Activated T-helper 1 cell treated with anti-CD3 and anti-CD28 coated beads, Interleukin-12 subunit alpha, Interleukin-12 subunit beta, Interleukin-2, Interleukin-4 antibody, amounts not matched to agents 30 ng/mL and 10 ng/mL and 1 ng/mL, durations not matched to agents 14 hours and 24 hours and 36 hours (primary cell): ENCODE measurements at regions of chrX and their contacts with region 1.

Region 1: GRCh38 chrX:120629667-120630537 is at the start of gene C1GALT1C1:
- DNase-seq: peak; percentile 88
- H3K4me3 Mint-ChIP-seq: peak within 1 kb of the TSS; percentile 93
- H3K27ac Mint-ChIP-seq: peak within 1 kb of the TSS; percentile 99
- H3K4me1 Mint-ChIP-seq: peaks cover 16% of the 10 kb centered on the region
- H3K27me3 Mint-ChIP-seq: no peaks in the 10 kb centered on the region
- total RNA-seq, gene C1GALT1C1: 21.0 and 23.7 TPM in 2 replicates

Region 2: GRCh38 chrX:120428309-120428708 is 201.6 kb before region 1 on chrX:
- intact Hi-C with region 1: no loop called
- DNase-seq: no peak
- H3K4me3 Mint-ChIP-seq: no peak overlapping the region
- H3K27ac Mint-ChIP-seq: no peak overlapping the region
- H3K4me1 Mint-ChIP-seq: peaks cover 6% of the 10 kb centered on the region
- H3K27me3 Mint-ChIP-seq: no peaks in the 10 kb centered on the region

Region 3: DNA sequence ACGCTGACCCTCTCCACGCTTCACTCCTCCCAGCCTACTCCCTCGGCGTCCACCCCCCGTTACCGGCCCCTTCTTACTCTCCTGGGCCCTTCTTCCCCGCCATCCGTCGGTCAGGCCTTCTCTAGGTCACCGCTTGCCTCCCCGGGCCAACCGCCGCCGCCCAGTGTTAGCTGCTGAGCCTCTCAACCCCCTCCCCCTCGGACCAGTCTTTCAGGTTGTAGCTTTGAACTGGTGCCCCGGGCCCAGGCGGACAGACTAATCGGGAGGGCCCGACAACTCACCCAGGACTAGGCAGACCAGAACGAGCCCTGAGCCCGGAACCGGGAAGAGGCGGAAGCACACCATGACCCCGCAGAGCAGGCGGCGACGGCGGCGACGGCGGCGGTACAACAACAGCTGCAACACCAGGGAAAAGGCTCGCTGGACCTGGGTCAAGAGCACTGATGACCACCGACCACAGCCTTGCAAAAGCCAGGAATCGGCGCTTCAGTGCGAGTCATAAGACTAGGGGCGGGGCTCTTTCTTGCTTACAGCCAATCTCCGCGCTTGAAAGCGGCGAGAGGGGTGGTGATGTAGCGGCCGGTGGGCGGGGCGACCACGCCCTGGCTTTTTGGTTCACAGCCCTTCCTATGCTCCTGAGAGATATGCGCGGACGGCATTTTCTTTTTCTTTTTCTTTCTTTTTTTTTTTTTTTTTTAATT is 160.9 kb before region 1 on chrX and contains the start of gene LAMP2:
- intact Hi-C with region 1: loop called (anchors 1 kb)
- DNase-seq: peak; percentile 75
- H3K4me3 Mint-ChIP-seq: peak within 1 kb of the TSS; percentile 90
- H3K27ac Mint-ChIP-seq: peak within 1 kb of the TSS; percentile 89
- H3K4me1 Mint-ChIP-seq: peaks cover 11% of the 10 kb centered on the region
- H3K27me3 Mint-ChIP-seq: no peaks in the 10 kb centered on the region
- total RNA-seq, gene LAMP2: 42.7 and 44.1 TPM in 2 replicates

Region 4: DNA sequence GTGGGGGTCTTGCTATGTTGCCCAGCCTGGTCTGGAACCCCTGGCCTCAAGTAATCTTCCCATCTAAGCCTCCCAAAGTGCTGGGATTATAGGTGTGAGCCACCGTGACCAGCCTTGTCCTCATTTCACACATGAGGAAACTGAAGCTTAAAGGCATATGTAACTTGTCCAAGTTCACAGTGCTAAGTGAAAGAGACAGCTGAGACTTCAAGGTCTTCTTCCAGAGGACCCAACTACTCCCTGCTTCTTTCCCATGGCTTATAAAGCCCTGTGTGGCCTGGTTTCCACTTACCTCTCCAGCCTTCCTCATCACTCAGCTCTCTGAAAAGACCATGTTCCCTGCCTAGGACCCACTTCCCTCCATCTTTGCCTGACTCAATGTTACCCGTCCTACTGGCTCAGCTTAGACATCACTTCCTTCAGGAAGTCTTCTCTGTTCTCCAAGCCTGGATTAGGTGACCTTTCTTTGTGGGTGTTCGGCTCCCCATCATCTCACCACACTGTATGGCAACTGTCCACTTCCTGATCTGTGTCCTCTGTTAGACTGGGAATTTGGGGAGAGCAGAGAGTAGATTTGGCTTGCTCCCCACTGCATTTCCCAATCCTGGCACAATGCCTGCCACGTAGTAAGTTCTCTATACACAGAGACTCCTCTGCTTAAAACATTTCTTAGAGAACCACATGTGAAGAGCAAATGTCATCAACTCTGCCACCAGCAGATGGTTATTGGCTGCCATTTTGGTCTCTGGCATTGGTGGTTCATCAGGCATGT is 130.4 kb before region 1 on chrX:
- intact Hi-C with region 1: loop called (anchors 1 kb)
- DNase-seq: no peak
- H3K4me3 Mint-ChIP-seq: no peak overlapping the region
- H3K27ac Mint-ChIP-seq: no peak overlapping the region
- H3K4me1 Mint-ChIP-seq: peaks cover 6% of the 10 kb centered on the region
- H3K27me3 Mint-ChIP-seq: no peaks in the 10 kb centered on the region

Region 5: GRCh38 chrX:120603707-120604360 is 26.1 kb before region 1 on chrX and contains the start of gene MCTS1:
- intact Hi-C with region 1: loop called (anchors 1 kb)
- DNase-seq: peak; percentile 75
- H3K4me3 Mint-ChIP-seq: peak within 1 kb of the TSS; percentile 99
- H3K27ac Mint-ChIP-seq: peak within 1 kb of the TSS; percentile 99
- H3K4me1 Mint-ChIP-seq: peaks cover 10% of the 10 kb centered on the region
- H3K27me3 Mint-ChIP-seq: no peaks in the 10 kb centered on the region
- total RNA-seq, gene MCTS1: 67.3 and 70.1 TPM in 2 replicates

Region 6: GRCh38 chrX:120755066-120755846 is 125.4 kb after region 1 on chrX:
- intact Hi-C with region 1: loop called (anchors 1 kb)
- DNase-seq: no peak
- H3K4me3 Mint-ChIP-seq: no peak overlapping the region
- H3K27ac Mint-ChIP-seq: peak overlapping the region; percentile 65
- H3K4me1 Mint-ChIP-seq: peaks cover 51% of the 10 kb centered on the region
- H3K27me3 Mint-ChIP-seq: no peaks in the 10 kb centered on the region